Left cardiac atrium (tissue), 4 donors: ENCODE measurements at regions of chr3 and their contacts with region 1.

Region 1: DNA sequence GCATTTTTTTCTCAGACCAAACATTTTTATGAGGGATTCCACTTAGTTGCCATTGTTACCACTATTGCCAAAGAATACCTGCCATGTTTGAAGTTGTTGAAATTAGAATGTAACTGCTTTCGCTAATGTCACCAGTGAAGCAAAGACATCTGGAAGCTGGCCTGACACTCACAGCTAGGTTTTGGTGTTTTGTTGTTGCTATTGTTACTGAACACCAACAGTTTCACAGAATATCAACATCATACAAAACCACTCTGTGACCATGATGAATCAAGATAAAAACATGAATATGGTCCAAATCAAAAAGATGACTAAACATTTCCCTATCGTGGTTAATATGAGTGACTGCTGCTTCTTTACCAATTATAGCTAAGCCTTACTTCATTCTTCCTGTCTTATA is 6.9 kb upstream of the CFAP20DC start:
- DNase-seq: no peak
- ATAC-seq: no peak

Region 2: DNA sequence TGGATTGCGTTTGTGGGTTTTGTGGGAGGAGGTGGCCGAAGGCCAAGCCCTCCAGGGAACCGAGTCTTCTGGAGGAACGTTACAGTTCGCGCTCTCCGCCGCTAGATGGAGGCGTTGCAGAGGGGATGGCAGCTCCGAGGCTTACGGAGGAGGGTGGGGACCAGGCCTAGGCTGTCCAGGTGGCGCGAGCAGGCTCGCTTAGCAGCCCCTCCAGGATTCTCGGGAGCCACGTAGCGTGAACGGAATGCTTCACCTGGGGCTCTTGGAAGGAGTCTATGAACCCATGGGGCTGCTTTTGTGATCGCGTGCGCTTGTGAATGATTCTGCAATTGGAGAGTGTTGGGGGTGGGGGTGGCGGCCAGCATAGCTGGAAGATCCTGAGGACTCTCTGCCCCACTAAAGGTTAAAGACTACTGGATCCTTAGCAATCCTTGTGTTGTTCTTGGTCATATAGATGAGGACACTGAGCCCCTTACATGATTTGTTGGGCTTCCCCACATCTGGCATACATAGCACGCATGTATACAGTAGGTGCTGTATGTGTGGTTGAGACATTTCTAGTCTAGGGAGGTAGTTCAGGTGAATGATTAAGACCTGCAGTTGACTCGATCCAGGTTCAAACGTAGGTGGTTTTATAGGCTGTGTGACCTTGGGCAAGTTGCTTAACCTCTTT is 415.9 kb before region 1 on chr3:
- intact Hi-C with region 1: loop called (anchors 5 kb)
- DNase-seq: peak; percentile 83
- ATAC-seq: peak; percentile 88 to 90

Region 3: DNA sequence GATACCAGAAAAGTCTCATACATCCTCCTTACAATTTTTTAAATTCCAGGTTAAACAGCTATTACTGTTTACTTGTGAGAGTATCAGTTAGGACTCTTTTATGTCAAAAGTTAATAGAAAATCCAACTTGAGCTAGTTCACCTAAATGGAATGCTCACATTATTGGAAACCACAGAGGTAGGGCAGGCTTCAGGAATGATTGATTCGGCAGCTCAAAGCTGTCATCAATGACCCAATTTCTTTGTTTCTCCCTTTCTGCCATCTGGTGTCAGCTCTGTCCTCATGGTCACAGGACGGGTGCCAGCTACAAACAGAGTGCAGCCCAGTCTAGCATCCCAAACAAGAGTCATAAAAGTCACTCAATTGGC is 39.1 kb before region 1 on chr3:
- intact Hi-C with region 1: no loop called
- DNase-seq: no peak
- ATAC-seq: no peak